ENCODE measurements at regions of chr3 and their contacts with region 1.

Region 1: GRCh38 chr3:98329392-98330124 is 24.1 kb upstream of the OR5K4 start:
- DNase-seq: peak; percentile 56
- H3K4me3 ChIP-seq: no peak overlapping the region
- H3K27ac ChIP-seq: no peak overlapping the region
- H3K4me1 ChIP-seq: no peaks in the 10 kb centered on the region
- CTCF ChIP-seq: peak; percentile 90

Region 2: GRCh38 chr3:98039322-98040024 is 290.1 kb before region 1 on chr3:
- CTCF ChIA-PET with region 1: no interaction called
- POLR2A ChIA-PET with region 1: no interaction called
- intact Hi-C with region 1: loop called (anchors 1 kb)
- DNase-seq: peak; percentile 81
- H3K4me3 ChIP-seq: peak overlapping the region; percentile 63
- H3K27ac ChIP-seq: no peak overlapping the region
- H3K4me1 ChIP-seq: no peaks in the 10 kb centered on the region
- CTCF ChIP-seq: peak; percentile 98

Region 3: GRCh38 chr3:98593046-98593936 is 263.7 kb after region 1 on chr3 and contains the start of gene CPOX:
- CTCF ChIA-PET with region 1: no interaction called
- POLR2A ChIA-PET with region 1: no interaction called
- intact Hi-C with region 1: loop called (anchors 1 kb)
- DNase-seq: peak; percentile 76
- H3K4me3 ChIP-seq: peak within 1 kb of the TSS; percentile 76
- H3K27ac ChIP-seq: no peak within 1 kb of the TSS
- H3K4me1 ChIP-seq: peaks cover 10% of the 10 kb centered on the region
- CTCF ChIP-seq: no peak
- total RNA-seq, gene CPOX: 14.7 and 16.4 TPM in 2 replicates

Measured in OCI-LY7 (cell line).